ENCODE measurements at regions of chr10 and their contacts with region 1.

Region 1: DNA sequence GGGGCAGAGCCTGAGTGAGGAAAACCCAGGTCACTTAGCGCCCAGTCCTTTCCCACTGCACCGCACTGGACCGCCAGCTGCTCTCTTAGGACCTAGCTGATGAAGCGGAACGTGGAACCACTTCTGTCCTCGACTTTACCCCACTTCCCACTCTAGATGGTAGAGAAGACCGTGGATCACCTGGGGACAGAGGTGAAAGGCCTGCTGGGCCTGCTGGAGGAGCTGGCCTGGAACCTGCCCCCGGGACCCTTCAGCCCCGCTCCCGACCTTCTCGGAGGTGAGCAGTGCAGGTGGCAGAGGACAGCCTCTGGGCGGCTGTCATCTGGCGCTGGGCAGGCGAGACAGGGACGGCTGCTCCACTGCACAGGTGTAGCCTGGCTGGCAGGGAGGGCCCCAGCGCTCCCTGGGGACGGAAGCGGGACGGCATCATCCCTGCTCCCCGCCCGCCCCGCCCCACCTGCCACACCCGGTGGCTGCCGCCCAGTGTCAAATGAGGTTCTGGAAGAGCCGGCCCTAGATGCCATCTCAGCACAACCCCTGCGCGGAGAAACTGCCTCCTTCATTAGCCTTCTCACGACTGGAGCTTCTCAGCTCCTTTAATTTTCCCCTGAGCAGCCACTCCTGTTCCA is 11.7 kb downstream of the PLAC9 start:
- DNase-seq: no peak
- H3K4me3 ChIP-seq: no peak overlapping the region; the same call in 1 of the 2 replicates
- CTCF ChIP-seq: no peak

Region 2: DNA sequence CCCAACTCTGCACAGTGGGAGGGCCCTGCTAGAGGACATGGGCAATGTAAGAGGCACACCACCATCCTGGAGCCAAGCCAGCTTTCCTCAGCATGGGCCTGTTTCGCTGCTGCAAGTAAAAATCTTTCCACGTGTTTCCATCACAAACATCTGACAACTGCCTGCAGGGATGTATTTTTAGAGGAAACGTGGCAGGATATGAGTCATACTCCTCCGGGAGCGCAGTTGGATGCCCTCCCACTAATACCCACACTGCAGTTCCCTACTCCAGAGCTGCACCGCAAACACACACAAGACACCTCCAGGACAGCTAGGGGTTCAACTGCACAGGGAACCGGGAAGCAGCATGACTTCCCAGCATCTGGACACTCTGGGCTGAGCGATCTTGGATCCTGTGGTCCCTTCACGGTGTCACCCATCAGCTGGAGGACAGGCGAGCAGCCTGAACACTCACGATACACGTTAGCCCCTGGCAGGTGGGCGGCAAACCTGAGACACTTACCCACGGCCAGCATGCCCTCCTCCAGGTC is 14.5 kb after region 1 on chr10:
- CTCF ChIA-PET with region 1: interaction called, 32 read pairs
- POLR2A ChIA-PET with region 1: no interaction called
- DNase-seq: peak; percentile 94
- H3K4me3 ChIP-seq: no peak overlapping the region
- CTCF ChIP-seq: no peak

Region 3: DNA sequence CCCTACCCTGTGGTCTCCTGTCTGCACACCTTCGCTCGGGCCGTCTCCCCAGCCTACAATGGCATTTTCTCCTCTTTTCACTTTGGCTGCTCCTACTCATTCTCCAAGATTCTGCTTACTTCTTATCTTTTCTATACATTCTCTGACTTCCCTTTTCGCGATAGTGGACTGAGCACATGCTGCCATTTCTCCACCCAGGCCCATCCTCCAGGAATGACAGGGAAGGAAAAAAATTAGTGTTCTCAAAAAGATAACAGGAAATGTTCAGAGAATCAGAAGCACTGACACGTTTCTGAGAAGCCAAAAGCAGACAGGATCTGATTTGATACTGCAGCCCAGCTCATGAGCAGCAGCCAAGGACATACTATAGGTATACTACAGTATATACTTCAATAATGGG is 67.6 kb after region 1 on chr10:
- CTCF ChIA-PET with region 1: interaction called, 13 read pairs
- POLR2A ChIA-PET with region 1: no interaction called
- DNase-seq: no peak
- H3K4me3 ChIP-seq: no peak overlapping the region
- CTCF ChIP-seq: no peak

Region 4: GRCh38 chr10:80260295-80261243 is 116.4 kb after region 1 on chr10:
- CTCF ChIA-PET with region 1: interaction called, 17 read pairs
- POLR2A ChIA-PET with region 1: no interaction called
- DNase-seq: no peak
- H3K4me3 ChIP-seq: no peak overlapping the region
- CTCF ChIP-seq: peak; percentile 82

Region 5: DNA sequence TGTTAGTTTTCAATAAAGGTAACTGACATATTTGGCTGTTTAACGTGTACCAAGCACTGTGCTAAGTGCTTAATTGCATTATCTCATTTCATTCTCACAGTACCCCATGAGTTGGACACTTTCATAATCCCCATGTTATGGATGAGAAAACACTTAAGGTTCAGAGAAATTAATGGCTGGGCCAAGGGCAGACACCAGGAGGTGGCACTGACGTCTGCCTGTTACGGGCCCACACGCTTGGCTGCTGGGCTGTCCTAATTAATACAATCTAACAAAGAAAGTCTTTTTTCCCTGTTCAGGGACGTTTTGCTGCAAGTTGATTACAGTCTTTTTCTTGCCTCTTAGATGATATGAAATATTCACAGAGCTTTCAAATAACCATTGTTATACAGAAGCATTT is 228.5 kb after region 1 on chr10:
- CTCF ChIA-PET with region 1: no interaction called
- POLR2A ChIA-PET with region 1: no interaction called
- DNase-seq: no peak
- H3K4me3 ChIP-seq: no peak overlapping the region
- CTCF ChIP-seq: no peak